ENCODE measurements at regions of chr17 and their contacts with region 1.

Region 1: GRCh38 chr17:81253358-81254131 is 14.4 kb downstream of the NDUFAF8 start:
- DNase-seq: peak; percentile 47 to 83 (median 58)
- ATAC-seq: peak; percentile 96
- H3K4me3 ChIP-seq: no peak overlapping the region
- H3K4me3 Mint-ChIP-seq: no peak overlapping the region
- H3K27ac ChIP-seq: no peak overlapping the region
- H3K27ac Mint-ChIP-seq: no peak overlapping the region
- H3K4me1 ChIP-seq: no peaks in the 10 kb centered on the region
- H3K4me1 Mint-ChIP-seq: peaks cover 11% of the 10 kb centered on the region
- H3K27me3 ChIP-seq: no peaks in the 10 kb centered on the region
- H3K27me3 Mint-ChIP-seq: no peaks in the 10 kb centered on the region
- CTCF ChIP-seq: peak; percentile 80

Region 2: GRCh38 chr17:80773243-80773991 is 480.1 kb before region 1 on chr17:
- CTCF ChIA-PET with region 1: no interaction called
- POLR2A ChIA-PET with region 1: no interaction called
- intact Hi-C with region 1: no loop called
- DNase-seq: peak in 1 of 14 experiments; percentile 45
- ATAC-seq: peak; percentile 81
- H3K4me3 ChIP-seq: no peak overlapping the region
- H3K4me3 Mint-ChIP-seq: peak overlapping the region; percentile 70
- H3K27ac ChIP-seq: no peak overlapping the region
- H3K27ac Mint-ChIP-seq: peak overlapping the region; percentile 91
- H3K4me1 ChIP-seq: peaks cover 39% of the 10 kb centered on the region
- H3K4me1 Mint-ChIP-seq: peaks cover 84% of the 10 kb centered on the region
- H3K27me3 ChIP-seq: no peaks in the 10 kb centered on the region
- H3K27me3 Mint-ChIP-seq: no peaks in the 10 kb centered on the region
- CTCF ChIP-seq: no peak

Region 3: DNA sequence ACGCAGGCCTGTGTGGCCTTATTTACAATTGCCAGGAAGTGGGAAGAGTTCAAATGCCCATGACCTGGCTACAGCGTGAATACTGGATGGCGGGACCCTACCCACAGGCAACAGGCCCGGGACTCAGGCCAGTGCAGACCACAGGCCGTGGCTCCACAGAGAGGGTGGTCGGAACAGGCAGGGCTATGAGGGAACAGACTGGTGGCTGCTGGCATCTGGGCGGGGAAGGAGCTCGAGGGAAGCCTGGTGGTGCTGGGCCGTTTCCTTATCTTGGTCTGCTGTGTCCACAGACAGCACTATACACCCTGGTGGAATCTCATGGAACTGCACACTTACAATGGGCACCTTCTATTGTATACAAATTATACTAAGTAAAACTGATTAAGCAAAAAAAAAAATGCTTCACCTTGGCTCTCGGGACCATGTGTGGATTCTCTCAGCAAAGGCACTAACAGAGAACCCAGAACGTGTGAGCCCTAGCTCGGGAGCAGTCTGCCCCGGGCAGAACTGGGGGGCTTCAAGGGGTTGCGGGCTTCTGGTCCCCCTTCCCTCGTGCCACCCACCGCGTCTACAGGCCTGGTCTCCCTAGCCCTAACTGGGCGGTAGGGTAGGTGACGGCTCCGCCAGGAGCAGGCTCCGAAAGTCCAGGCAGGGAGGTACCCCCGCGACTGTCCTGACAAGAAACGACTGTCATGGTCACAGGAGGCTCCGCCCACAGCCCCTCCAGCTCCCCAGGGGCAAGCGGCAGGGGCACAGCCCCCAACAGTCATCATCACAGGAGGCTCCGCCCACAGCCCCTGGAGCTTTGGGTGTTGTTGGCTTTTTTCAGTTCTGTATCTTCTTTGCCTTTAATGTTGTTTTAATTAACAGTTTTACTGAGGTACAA is 52.6 kb before region 1 on chr17:
- CTCF ChIA-PET with region 1: no interaction called
- POLR2A ChIA-PET with region 1: no interaction called
- intact Hi-C with region 1: no loop called
- DNase-seq: peak in 3 of 14 experiments; percentile 21 to 56 (median 55)
- ATAC-seq: peak; percentile 58
- H3K4me3 ChIP-seq: no peak overlapping the region
- H3K4me3 Mint-ChIP-seq: no peak overlapping the region
- H3K27ac ChIP-seq: no peak overlapping the region
- H3K27ac Mint-ChIP-seq: no peak overlapping the region
- H3K4me1 ChIP-seq: no peaks in the 10 kb centered on the region
- H3K4me1 Mint-ChIP-seq: no peaks in the 10 kb centered on the region
- H3K27me3 ChIP-seq: no peaks in the 10 kb centered on the region
- H3K27me3 Mint-ChIP-seq: no peaks in the 10 kb centered on the region
- CTCF ChIP-seq: no peak

Region 4: DNA sequence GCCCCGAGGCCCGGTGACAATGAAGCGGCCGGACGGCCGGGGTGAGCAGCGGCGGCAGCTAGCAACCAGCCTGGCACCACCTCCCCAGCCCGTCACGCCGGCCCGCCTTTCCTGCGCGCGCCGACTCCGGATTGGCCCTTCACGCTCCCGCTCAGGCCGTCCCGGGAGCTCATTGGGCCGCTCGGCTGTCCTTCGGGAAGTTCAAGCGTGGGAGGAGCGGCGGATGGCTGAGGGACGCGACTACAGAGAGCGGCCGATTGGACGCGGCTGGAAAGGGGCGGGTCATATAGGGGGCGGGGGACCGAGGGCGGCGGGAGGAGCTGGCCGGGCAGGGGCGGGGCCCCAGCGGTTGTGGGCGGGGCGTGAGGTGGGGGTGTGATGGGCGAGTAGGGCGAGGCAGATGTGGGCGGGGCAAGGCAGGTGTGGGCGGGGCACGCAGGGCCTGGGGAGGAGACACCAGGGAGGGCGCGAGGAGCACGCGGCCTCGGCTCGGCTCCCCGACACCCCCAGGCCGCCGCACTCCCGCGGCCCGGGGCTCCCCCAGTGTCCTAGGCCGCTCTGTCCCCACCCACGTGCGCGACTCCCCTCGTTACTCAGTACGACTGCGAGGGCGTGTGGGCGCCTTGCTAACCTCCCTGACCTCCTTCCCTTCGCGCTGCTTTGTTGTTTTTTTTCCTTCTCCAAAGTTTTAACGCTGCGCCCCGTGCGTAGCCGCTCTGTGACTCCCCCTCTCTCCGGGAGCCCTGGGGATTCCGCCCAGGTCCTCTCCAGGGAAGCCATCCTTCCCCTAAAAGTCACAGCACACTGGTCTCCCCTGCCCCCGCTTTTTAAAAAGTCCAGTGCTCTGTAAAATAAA is 30.4 kb before region 1 on chr17 and contains the start of gene CEP131:
- CTCF ChIA-PET with region 1: no interaction called
- POLR2A ChIA-PET with region 1: no interaction called
- intact Hi-C with region 1: loop called in 1 of 2 experiments (anchors 1 kb)
- DNase-seq: peak; percentile 97 to 100 (median 100)
- ATAC-seq: peak; percentile 95
- H3K4me3 ChIP-seq: peak within 1 kb of the TSS; percentile 65
- H3K4me3 Mint-ChIP-seq: peak within 1 kb of the TSS; percentile 87
- H3K27ac ChIP-seq: no peak within 1 kb of the TSS
- H3K27ac Mint-ChIP-seq: no peak within 1 kb of the TSS
- H3K4me1 ChIP-seq: peaks cover 25% of the 10 kb centered on the region
- H3K4me1 Mint-ChIP-seq: peaks cover 23% of the 10 kb centered on the region
- H3K27me3 ChIP-seq: no peaks in the 10 kb centered on the region
- H3K27me3 Mint-ChIP-seq: no peaks in the 10 kb centered on the region
- CTCF ChIP-seq: no peak
- total RNA-seq, gene CEP131: 11.2 to 12.3 TPM

Region 5: GRCh38 chr17:81306486-81306885 is 52.9 kb after region 1 on chr17:
- CTCF ChIA-PET with region 1: no interaction called
- POLR2A ChIA-PET with region 1: no interaction called
- intact Hi-C with region 1: no loop called
- DNase-seq: no peak
- ATAC-seq: no peak
- H3K4me3 ChIP-seq: no peak overlapping the region
- H3K4me3 Mint-ChIP-seq: no peak overlapping the region
- H3K27ac ChIP-seq: no peak overlapping the region
- H3K27ac Mint-ChIP-seq: no peak overlapping the region
- H3K4me1 ChIP-seq: peaks cover 10% of the 10 kb centered on the region
- H3K4me1 Mint-ChIP-seq: peaks cover 4% of the 10 kb centered on the region
- H3K27me3 ChIP-seq: peaks cover 3 to 15% of the 10 kb centered on the region in 2 experiments
- H3K27me3 Mint-ChIP-seq: peaks cover 14% of the 10 kb centered on the region
- CTCF ChIP-seq: no peak

Region 6: DNA sequence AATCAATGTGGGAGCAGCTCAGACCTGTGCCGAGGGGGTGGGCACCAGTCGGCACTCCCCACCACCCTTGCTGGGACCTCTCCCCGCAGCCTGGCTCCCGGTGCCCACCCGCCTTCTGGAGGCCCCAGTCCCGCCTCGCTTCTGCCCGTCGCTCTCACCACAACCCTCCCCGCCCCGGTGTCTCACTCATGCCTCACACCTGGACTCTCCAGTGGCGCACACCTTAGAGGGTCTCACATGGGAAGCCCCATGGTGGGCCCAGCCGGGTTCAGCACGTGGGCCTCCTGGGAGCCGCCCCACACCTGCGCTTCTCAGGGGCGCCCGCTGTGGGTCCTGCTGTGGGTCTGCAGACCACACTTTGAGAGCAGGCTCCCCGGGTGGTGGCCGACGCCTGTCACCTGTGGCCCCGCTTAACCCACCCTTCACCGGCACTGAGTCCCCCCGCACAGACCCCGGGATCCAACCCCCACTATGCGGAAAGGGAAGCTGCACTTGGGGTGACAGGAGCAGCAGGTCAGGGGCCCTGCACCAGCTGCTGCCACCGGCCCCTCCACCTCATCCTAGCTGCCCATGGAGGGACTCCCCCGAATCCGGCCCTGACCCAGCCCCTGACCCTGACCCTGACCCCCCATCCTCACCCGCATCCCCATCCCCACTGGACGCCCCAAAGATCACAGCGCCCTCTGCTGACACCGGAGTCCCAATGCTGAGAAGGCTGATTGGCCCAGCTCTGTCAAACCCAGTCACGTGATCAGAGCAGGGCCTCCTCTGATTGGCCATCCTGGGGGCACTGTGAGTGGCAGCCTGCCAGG is 68.9 kb after region 1 on chr17:
- CTCF ChIA-PET with region 1: no interaction called
- POLR2A ChIA-PET with region 1: no interaction called
- intact Hi-C with region 1: loop called in 1 of 2 experiments (anchors 2 kb)
- DNase-seq: peak in 9 of 14 experiments; percentile 10 to 70 (median 36)
- ATAC-seq: peak; percentile 76
- H3K4me3 ChIP-seq: no peak overlapping the region
- H3K4me3 Mint-ChIP-seq: no peak overlapping the region
- H3K27ac ChIP-seq: no peak overlapping the region
- H3K27ac Mint-ChIP-seq: no peak overlapping the region
- H3K4me1 ChIP-seq: no peaks in the 10 kb centered on the region
- H3K4me1 Mint-ChIP-seq: no peaks in the 10 kb centered on the region
- H3K27me3 ChIP-seq: no peaks in the 10 kb centered on the region
- H3K27me3 Mint-ChIP-seq: no peaks in the 10 kb centered on the region
- CTCF ChIP-seq: no peak

Region 7: DNA sequence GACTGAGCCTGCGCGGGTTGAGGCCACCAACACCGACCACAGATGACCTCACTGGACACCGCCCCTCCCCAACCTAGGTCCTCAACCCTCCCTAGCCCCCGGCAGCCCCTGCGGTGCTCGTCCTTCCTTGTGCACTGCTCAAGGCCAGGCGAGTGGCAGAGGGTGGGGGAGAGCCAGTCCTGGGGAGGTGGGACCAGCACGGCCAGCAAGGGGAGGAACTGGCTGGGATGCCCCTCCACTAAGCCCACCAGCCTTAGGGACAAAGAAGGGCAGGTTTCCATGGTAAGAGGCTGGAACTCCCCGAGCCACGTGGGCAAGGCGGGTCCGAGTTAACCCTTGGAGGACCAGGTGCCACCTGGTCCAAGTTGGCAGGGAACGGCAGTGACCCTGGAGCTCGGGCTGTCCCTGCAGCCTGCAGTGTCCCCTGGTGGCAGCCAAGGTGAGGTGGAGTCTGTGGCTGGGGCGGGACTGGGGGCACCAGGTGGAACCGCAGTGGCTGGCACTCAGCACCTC is 283.9 kb after region 1 on chr17:
- CTCF ChIA-PET with region 1: interaction called, 3 read pairs
- POLR2A ChIA-PET with region 1: no interaction called
- intact Hi-C with region 1: loop called in 1 of 2 experiments (anchors 1 kb)
- DNase-seq: peak in 7 of 14 experiments; percentile 24 to 64 (median 51)
- ATAC-seq: peak; percentile 62
- H3K4me3 ChIP-seq: no peak overlapping the region
- H3K4me3 Mint-ChIP-seq: no peak overlapping the region
- H3K27ac ChIP-seq: no peak overlapping the region
- H3K27ac Mint-ChIP-seq: no peak overlapping the region
- H3K4me1 ChIP-seq: peaks cover 9% of the 10 kb centered on the region
- H3K4me1 Mint-ChIP-seq: no peaks in the 10 kb centered on the region
- H3K27me3 ChIP-seq: peaks cover 34 to 51% of the 10 kb centered on the region in 2 experiments
- H3K27me3 Mint-ChIP-seq: peaks cover 32% of the 10 kb centered on the region
- CTCF ChIP-seq: no peak

Region 8: GRCh38 chr17:81553018-81553615 is 299.6 kb after region 1 on chr17:
- CTCF ChIA-PET with region 1: no interaction called
- POLR2A ChIA-PET with region 1: no interaction called
- intact Hi-C with region 1: loop called in 1 of 2 experiments (anchors 1 kb)
- DNase-seq: peak; percentile 48 to 92 (median 72)
- ATAC-seq: peak; percentile 74
- H3K4me3 ChIP-seq: peak overlapping the region; percentile 94
- H3K4me3 Mint-ChIP-seq: peak overlapping the region; percentile 94
- H3K27ac ChIP-seq: peak overlapping the region; percentile 79 to 83
- H3K27ac Mint-ChIP-seq: peak overlapping the region; percentile 93
- H3K4me1 ChIP-seq: peaks cover 41% of the 10 kb centered on the region
- H3K4me1 Mint-ChIP-seq: peaks cover 30% of the 10 kb centered on the region
- H3K27me3 ChIP-seq: no peaks in the 10 kb centered on the region
- H3K27me3 Mint-ChIP-seq: no peaks in the 10 kb centered on the region
- CTCF ChIP-seq: peak; percentile 0

Region 9: DNA sequence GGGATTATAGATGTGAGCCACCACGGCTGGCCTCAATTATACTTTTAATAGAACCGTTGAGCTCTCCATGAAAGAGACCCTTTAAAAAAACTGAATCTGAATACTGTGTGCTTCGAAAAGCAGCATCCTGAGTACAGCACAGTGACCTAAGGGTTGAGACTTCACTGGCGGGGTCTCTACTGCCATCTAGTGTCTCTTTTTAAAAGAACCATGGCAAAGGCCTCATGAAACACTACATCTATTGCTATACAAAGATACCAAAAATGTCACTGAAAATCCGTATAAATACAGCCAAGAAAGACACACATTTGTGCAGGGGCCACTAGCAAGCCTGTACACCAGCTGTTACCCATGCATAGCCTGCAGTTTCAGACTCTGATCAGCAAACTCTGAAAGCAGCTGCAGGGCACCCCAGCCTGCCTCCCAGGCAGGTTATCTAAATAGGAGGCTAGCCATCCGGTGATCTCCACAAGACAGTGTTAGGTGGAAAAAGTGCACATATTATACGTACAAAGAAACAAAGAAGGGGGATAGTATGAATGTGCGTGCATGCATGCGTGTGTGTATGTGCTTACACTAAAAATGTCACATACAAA is 348.1 kb after region 1 on chr17:
- CTCF ChIA-PET with region 1: interaction called, 3 read pairs
- POLR2A ChIA-PET with region 1: no interaction called
- intact Hi-C with region 1: loop called in 1 of 2 experiments (anchors 1 kb)
- DNase-seq: peak in 12 of 14 experiments; percentile 10 to 80 (median 26)
- ATAC-seq: peak; percentile 98
- H3K4me3 ChIP-seq: no peak overlapping the region
- H3K4me3 Mint-ChIP-seq: no peak overlapping the region
- H3K27ac ChIP-seq: no peak overlapping the region
- H3K27ac Mint-ChIP-seq: no peak overlapping the region
- H3K4me1 ChIP-seq: peaks cover 3% of the 10 kb centered on the region
- H3K4me1 Mint-ChIP-seq: peaks cover 6% of the 10 kb centered on the region
- H3K27me3 ChIP-seq: no peaks in the 10 kb centered on the region
- H3K27me3 Mint-ChIP-seq: no peaks in the 10 kb centered on the region
- CTCF ChIP-seq: peak; percentile 84